Left cardiac atrium (tissue), 4 donors: ENCODE measurements at regions of chr11 and their contacts with region 1.

Region 1: DNA sequence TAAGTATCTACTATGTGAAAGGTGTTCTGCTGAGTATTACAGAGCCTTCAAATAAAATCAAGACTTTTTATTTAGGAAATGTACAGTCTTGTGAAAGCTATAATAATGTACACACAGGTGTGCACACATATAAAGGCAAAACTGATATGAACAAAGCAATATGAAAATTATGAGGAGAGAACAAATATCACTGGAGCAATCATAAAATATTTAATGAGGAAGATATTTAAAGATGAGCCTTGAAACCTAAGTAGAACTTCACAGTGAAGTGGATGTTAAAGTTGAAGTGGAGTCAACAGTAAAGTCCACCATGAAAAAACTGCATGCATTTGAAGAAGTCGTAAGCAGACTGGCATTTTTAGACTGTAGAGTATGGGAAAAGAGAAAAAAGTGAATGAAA is 18.5 kb downstream of the OR51F1 start:
- DNase-seq: no peak
- ATAC-seq: no peak

Region 2: DNA sequence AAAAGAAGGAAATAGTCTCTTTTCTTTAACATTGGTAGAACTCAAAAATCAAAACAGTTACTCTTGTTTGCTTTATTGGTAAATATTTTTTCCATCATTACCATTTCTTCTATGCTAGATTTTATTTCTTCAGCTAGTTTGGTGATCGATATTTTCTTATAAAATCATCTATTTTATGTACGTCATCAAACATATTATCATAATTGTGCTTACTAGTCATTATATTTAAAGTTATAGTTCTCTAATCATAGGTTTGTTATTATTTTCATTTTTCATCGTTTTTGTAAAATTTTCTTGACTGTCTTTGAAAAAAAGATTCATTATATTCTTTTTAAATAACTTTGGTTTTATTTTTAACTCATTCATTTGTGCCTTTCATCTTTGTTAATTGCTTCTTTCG is 67.0 kb after region 1 on chr11:
- intact Hi-C with region 1: loop called in 1 of 2 experiments (anchors 10 kb)
- DNase-seq: no peak
- ATAC-seq: no peak

Region 3: DNA sequence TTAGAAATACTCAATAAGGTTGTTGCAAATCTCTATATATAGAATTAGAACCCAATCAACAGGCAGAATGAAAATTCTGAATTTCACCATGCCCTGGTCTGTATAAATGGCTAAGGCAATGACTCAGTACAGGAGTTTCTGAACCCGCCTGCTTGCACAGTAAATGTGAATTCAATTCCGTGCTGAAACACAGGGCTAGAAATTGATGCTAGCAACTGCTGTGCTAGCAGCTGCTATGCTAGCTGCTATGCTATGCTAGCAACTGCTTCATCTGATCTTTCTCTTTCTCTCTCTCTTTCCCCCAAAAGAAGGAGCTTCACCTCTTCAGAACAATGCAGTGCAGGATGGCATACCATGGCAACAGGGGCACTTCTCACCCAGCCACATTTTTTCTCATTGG is 285.5 kb after region 1 on chr11:
- intact Hi-C with region 1: no loop called
- DNase-seq: no peak
- ATAC-seq: no peak